PC-3 (cell line): ENCODE measurements at regions of chr16 and their contacts with region 1.

Region 1: DNA sequence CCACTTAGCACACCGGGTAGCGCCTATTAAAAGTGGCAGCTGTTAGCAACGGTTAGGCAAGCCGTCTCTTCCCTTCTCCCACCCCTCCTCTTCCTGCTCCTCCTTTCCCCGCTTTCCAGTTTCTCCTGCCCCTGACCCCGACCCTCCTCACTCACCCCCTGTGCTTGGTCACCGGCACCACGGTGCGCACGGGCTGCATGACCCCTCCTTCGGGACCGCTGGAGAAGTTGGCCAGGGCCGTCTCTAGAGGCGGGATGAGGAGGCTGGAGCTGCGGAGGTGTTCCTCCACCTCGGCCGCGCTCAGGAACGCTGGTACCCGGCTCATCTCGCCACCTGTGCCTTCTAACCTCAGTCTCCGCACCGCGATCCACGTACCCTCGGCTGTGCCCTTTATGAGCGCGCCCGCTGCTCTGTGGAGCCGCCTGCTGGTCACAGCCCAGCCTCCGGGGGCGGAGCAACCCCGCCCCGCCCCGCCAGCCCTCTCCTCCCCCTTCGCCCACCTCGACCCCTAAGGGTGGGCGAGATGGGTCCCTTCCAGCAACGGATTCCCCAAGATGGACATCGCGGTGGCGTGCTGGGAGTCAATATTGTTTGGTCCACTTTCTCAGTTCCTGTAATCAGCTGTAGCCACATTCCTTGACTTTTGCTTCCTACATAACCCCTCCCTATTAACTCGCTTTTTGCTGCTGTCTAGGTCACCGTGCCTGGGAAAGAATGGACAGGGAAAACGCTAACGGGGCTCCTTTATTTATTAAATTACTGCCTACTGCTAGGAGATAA is at the start of gene CRYM:
- DNase-seq: peak; percentile 37
- ATAC-seq: peak; percentile 79
- H3K4me3 ChIP-seq: peak within 1 kb of the TSS; percentile 50; the same call in 1 of the 2 replicates
- H3K27ac ChIP-seq: no peak within 1 kb of the TSS
- H3K4me1 ChIP-seq: no peaks in the 10 kb centered on the region
- H3K27me3 ChIP-seq: peaks cover 42% of the 10 kb centered on the region
- CTCF ChIP-seq: peak; percentile 69
- total RNA-seq, gene CRYM: not detected in 2 replicates

Region 2: GRCh38 chr16:21184834-21185233 is 93.3 kb before region 1 on chr16:
- CTCF ChIA-PET with region 1: no interaction called
- POLR2A ChIA-PET with region 1: no interaction called
- intact Hi-C with region 1: loop called (anchors 5 kb)
- DNase-seq: no peak
- ATAC-seq: no peak
- H3K4me3 ChIP-seq: no peak overlapping the region
- H3K27ac ChIP-seq: no peak overlapping the region
- H3K4me1 ChIP-seq: peaks cover 11% of the 10 kb centered on the region
- H3K27me3 ChIP-seq: no peaks in the 10 kb centered on the region
- CTCF ChIP-seq: no peak